Panc1 (cell line): ENCODE measurements at regions of chr6 and their contacts with region 1.

Region 1: GRCh38 chr6:52419809-52420670 is at the start of gene EFHC1:
- DNase-seq: peak; percentile 89
- ATAC-seq: peak; percentile 93
- H3K4me3 ChIP-seq: peak within 1 kb of the TSS; percentile 97
- H3K27ac ChIP-seq: peak within 1 kb of the TSS; percentile 95
- H3K4me1 ChIP-seq: peaks cover 51% of the 10 kb centered on the region
- H3K27me3 ChIP-seq: no peaks in the 10 kb centered on the region
- CTCF ChIP-seq: no peak
- total RNA-seq, gene EFHC1: 24.6 TPM

Region 2: DNA sequence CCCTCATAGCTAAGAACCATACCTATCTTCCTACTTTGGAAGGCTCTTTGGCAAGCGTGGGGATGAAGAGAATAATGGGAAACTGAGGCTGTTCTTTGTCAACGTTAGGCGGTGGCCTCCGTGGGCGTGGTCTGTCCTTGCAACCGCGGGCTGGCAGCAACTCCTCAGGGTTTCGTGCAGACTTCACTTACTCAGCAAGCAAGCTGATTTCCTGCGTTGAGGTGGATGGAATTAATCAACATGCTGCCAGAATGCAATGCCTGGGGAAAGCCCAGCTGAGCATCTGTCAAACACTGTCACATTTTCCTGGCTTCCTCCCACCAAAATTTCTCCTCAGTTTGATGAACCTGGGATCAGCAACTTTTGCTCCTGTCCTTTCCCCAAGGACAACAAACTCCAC is 166.5 kb before region 1 on chr6:
- CTCF ChIA-PET with region 1: no interaction called
- POLR2A ChIA-PET with region 1: no interaction called
- in situ Hi-C with region 1: no loop called
- intact Hi-C with region 1: no loop called
- DNase-seq: no peak
- ATAC-seq: no peak
- H3K4me3 ChIP-seq: no peak overlapping the region
- H3K27ac ChIP-seq: no peak overlapping the region
- H3K4me1 ChIP-seq: no peaks in the 10 kb centered on the region
- H3K27me3 ChIP-seq: peaks cover 27% of the 10 kb centered on the region
- CTCF ChIP-seq: no peak

Region 3: GRCh38 chr6:52407467-52407866 is 12.6 kb before region 1 on chr6:
- CTCF ChIA-PET with region 1: interaction called, 10 read pairs
- POLR2A ChIA-PET with region 1: no interaction called
- in situ Hi-C with region 1: no loop called
- intact Hi-C with region 1: no loop called
- DNase-seq: no peak
- ATAC-seq: peak; percentile 85
- H3K4me3 ChIP-seq: no peak overlapping the region
- H3K27ac ChIP-seq: no peak overlapping the region
- H3K4me1 ChIP-seq: no peaks in the 10 kb centered on the region
- H3K27me3 ChIP-seq: no peaks in the 10 kb centered on the region
- CTCF ChIP-seq: peak; percentile 69; the same call in 1 of the 2 replicates

Region 4: GRCh38 chr6:52497652-52498408 is 77.8 kb after region 1 on chr6:
- CTCF ChIA-PET with region 1: no interaction called
- POLR2A ChIA-PET with region 1: interaction called, 5 read pairs
- in situ Hi-C with region 1: no loop called
- intact Hi-C with region 1: loop called (anchors 5 kb)
- DNase-seq: no peak
- ATAC-seq: no peak
- H3K4me3 ChIP-seq: no peak overlapping the region
- H3K27ac ChIP-seq: 0 out of 2 replicates have a peak overlapping the region, but pooled peaks have one; percentile 18
- H3K4me1 ChIP-seq: peaks cover 2% of the 10 kb centered on the region; the same call in 1 of the 2 replicates
- H3K27me3 ChIP-seq: no peaks in the 10 kb centered on the region
- CTCF ChIP-seq: no peak

Region 5: GRCh38 chr6:52566853-52567279 is 146.8 kb after region 1 on chr6:
- CTCF ChIA-PET with region 1: no interaction called
- POLR2A ChIA-PET with region 1: no interaction called
- in situ Hi-C with region 1: no loop called
- intact Hi-C with region 1: no loop called
- DNase-seq: no peak
- ATAC-seq: no peak
- H3K4me3 ChIP-seq: no peak overlapping the region
- H3K27ac ChIP-seq: no peak overlapping the region
- H3K4me1 ChIP-seq: peaks cover 35% of the 10 kb centered on the region
- H3K27me3 ChIP-seq: no peaks in the 10 kb centered on the region
- CTCF ChIP-seq: no peak

Region 6: GRCh38 chr6:52577022-52577777 is 157.2 kb after region 1 on chr6 and contains the start of gene TRAM2:
- CTCF ChIA-PET with region 1: interaction called, 3 read pairs
- POLR2A ChIA-PET with region 1: interaction called, 10 read pairs
- in situ Hi-C with region 1: no loop called
- intact Hi-C with region 1: loop called (anchors 5 kb)
- DNase-seq: no peak
- ATAC-seq: peak; percentile 87
- H3K4me3 ChIP-seq: peak within 1 kb of the TSS; percentile 69 to 80
- H3K27ac ChIP-seq: peak within 1 kb of the TSS; percentile 98
- H3K4me1 ChIP-seq: peaks cover 32% of the 10 kb centered on the region
- H3K27me3 ChIP-seq: no peaks in the 10 kb centered on the region
- CTCF ChIP-seq: no peak
- total RNA-seq, gene TRAM2: 56.7 TPM

Region 7: DNA sequence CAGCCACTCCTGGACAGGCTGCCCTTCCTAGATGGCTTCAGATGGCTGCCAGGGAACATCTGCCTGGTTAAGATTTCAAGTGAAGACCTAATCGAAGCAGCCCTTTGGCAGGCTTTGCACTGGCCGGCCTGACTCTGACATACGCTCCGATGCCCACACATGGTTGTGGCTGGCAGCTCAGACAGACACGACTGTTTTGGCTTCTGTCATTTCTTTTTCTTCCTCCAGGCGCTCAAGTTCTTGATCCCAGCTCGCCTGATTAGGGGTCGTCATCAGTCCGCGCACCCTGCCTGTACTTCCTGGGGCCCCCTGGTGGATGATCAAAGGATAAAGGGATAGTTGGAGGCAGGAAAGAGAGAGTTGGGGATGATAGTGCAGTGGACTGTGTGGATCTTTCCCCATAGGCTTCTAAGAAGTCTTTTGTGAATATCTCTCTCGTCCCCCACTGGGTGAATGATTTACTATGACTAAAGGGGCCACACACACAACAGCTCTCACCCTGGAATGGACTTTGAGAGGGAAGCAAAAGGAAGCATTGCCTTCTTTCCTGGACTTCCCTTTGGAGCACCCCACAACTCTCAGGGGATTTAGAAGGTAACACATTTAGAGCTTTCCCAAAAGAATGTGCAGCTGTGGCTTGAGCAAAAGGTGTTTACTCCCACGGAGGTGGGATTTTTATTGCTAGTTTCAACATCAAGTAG is 178.2 kb after region 1 on chr6:
- CTCF ChIA-PET with region 1: no interaction called
- POLR2A ChIA-PET with region 1: interaction called, 3 read pairs
- in situ Hi-C with region 1: no loop called
- intact Hi-C with region 1: loop called (anchors 2 kb)
- DNase-seq: no peak
- ATAC-seq: peak; percentile 86
- H3K4me3 ChIP-seq: peak overlapping the region; percentile 7 to 43
- H3K27ac ChIP-seq: peak overlapping the region; percentile 30
- H3K4me1 ChIP-seq: peaks cover 36% of the 10 kb centered on the region
- H3K27me3 ChIP-seq: no peaks in the 10 kb centered on the region
- CTCF ChIP-seq: peak; percentile 83

Region 8: GRCh38 chr6:52664186-52664990 is 244.3 kb after region 1 on chr6:
- CTCF ChIA-PET with region 1: interaction called, 18 read pairs
- POLR2A ChIA-PET with region 1: interaction called, 3 read pairs
- in situ Hi-C with region 1: no loop called
- intact Hi-C with region 1: loop called (anchors 1 kb)
- DNase-seq: peak; percentile 80
- ATAC-seq: peak; percentile 97
- H3K4me3 ChIP-seq: peak overlapping the region; percentile 82 to 84
- H3K27ac ChIP-seq: peak overlapping the region; percentile 92
- H3K4me1 ChIP-seq: peaks cover 17% of the 10 kb centered on the region
- H3K27me3 ChIP-seq: no peaks in the 10 kb centered on the region
- CTCF ChIP-seq: no peak